ENCODE measurements at regions of chr18 and their contacts with region 1.

Region 1: GRCh38 chr18:59823596-59824195 is 76.1 kb upstream of the PMAIP1 start:
- DNase-seq: peak; percentile 86
- ATAC-seq: peak; percentile 97
- H3K4me3 Mint-ChIP-seq: no peak overlapping the region
- H3K27ac Mint-ChIP-seq: no peak overlapping the region
- H3K4me1 Mint-ChIP-seq: peaks cover 6% of the 10 kb centered on the region; the same call in 1 of the 2 replicates
- H3K27me3 Mint-ChIP-seq: no peaks in the 10 kb centered on the region
- CTCF ChIP-seq: peak; percentile 84

Region 2: GRCh38 chr18:59446012-59446411 is 377.7 kb before region 1 on chr18:
- CTCF ChIA-PET with region 1: interaction called, 16 read pairs
- POLR2A ChIA-PET with region 1: no interaction called
- DNase-seq: no peak
- ATAC-seq: peak; percentile 83
- H3K4me3 Mint-ChIP-seq: no peak overlapping the region
- H3K27ac Mint-ChIP-seq: no peak overlapping the region
- H3K4me1 Mint-ChIP-seq: peaks cover 3% of the 10 kb centered on the region
- H3K27me3 Mint-ChIP-seq: no peaks in the 10 kb centered on the region
- CTCF ChIP-seq: no peak

Region 3: GRCh38 chr18:59617468-59617932 is 206.2 kb before region 1 on chr18:
- CTCF ChIA-PET with region 1: interaction called, 10 read pairs
- POLR2A ChIA-PET with region 1: no interaction called
- DNase-seq: no peak
- ATAC-seq: no peak
- H3K4me3 Mint-ChIP-seq: no peak overlapping the region
- H3K27ac Mint-ChIP-seq: no peak overlapping the region
- H3K4me1 Mint-ChIP-seq: peaks cover 8% of the 10 kb centered on the region
- H3K27me3 Mint-ChIP-seq: no peaks in the 10 kb centered on the region
- CTCF ChIP-seq: no peak

Region 4: DNA sequence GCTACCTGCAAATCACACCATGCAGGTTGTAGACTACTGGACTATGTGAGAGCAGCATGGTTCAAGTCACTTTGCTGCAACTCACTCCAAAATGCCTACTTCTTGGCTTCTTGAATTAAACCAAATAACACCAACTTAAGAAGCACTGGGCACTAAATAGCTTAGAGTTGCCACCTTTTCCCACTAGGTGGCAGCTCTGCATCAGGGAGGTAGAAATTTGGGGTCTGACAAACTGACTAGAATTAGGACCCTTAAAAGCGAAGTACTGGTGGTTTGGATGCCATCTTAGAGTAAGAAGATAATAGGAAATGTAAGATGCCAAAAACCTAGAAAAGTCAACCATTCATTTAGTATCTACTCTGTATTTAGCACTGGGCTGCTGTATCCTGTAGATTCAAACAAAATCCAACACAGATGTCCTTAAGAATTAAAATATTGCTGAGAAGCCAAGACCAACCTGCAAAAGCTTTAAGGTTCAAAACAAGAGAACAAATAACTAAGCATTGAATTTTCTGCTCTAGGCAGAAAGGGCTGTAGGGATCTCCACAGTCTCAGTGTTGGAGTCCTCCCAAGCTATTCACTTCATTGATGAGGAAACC is 192.0 kb before region 1 on chr18:
- CTCF ChIA-PET with region 1: interaction called, 140 read pairs
- POLR2A ChIA-PET with region 1: no interaction called
- DNase-seq: peak; percentile 51
- ATAC-seq: peak; percentile 78
- H3K4me3 Mint-ChIP-seq: no peak overlapping the region
- H3K27ac Mint-ChIP-seq: no peak overlapping the region
- H3K4me1 Mint-ChIP-seq: peaks cover 23% of the 10 kb centered on the region
- H3K27me3 Mint-ChIP-seq: no peaks in the 10 kb centered on the region
- CTCF ChIP-seq: peak; percentile 59

Region 5: DNA sequence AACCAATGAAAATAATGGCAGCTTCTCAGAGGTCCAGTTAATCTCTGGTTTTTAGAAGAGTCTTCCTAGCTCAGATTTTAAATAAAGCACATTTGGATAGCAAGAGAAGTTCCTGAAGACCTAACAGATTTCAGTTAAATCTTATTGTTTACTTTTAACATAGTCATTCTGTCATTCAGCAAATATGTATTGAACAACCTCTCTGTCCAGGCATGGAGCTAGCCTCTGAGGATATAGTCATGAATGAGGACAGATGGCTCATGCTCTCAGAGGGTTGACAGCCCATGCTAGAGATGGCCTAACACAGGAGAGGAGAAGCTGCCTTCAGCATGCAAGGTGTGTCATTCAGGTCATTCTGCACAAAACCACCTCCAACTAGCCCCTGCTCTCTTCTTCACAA is 132.7 kb before region 1 on chr18:
- CTCF ChIA-PET with region 1: interaction called, 90 read pairs
- POLR2A ChIA-PET with region 1: no interaction called
- DNase-seq: no peak
- ATAC-seq: no peak
- H3K4me3 Mint-ChIP-seq: no peak overlapping the region
- H3K27ac Mint-ChIP-seq: no peak overlapping the region
- H3K4me1 Mint-ChIP-seq: peaks cover 84% of the 10 kb centered on the region
- H3K27me3 Mint-ChIP-seq: peaks cover 44% of the 10 kb centered on the region
- CTCF ChIP-seq: no peak

Region 6: DNA sequence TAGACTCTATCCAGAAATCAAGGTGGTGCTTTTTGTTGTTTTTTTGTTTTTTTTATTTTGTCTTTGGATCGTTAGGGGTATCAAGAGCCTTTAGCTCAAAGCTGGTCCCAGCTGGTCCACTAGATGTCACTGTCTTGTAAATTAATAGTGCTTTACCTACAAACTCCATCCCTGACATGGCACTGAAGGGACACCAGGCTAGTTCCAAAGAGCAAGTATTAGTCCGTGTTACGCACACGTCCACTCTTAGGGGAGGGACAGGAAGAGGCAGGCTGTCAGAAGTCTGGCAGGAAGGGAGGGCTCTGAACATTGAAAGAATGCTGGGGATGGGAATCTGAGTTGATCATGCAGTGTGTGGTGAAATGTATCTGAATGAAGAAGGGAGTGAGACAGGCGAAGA is 40.6 kb before region 1 on chr18:
- CTCF ChIA-PET with region 1: interaction called, 42 read pairs
- POLR2A ChIA-PET with region 1: interaction called, 5 read pairs
- DNase-seq: peak; percentile 42
- ATAC-seq: peak; percentile 94
- H3K4me3 Mint-ChIP-seq: no peak overlapping the region
- H3K27ac Mint-ChIP-seq: peak overlapping the region; percentile 41
- H3K4me1 Mint-ChIP-seq: peaks cover 6% of the 10 kb centered on the region
- H3K27me3 Mint-ChIP-seq: no peaks in the 10 kb centered on the region
- CTCF ChIP-seq: no peak

Region 7: GRCh38 chr18:60096428-60096827 is 272.7 kb after region 1 on chr18:
- CTCF ChIA-PET with region 1: no interaction called
- POLR2A ChIA-PET with region 1: no interaction called
- DNase-seq: no peak
- ATAC-seq: no peak
- H3K4me3 Mint-ChIP-seq: no peak overlapping the region
- H3K27ac Mint-ChIP-seq: no peak overlapping the region
- H3K4me1 Mint-ChIP-seq: peaks cover 3% of the 10 kb centered on the region; the same call in 1 of the 2 replicates
- H3K27me3 Mint-ChIP-seq: no peaks in the 10 kb centered on the region
- CTCF ChIP-seq: no peak

Measured in WTC11 (cell line).